ENCODE measurements at regions of chr2 and their contacts with region 1.

Region 1: DNA sequence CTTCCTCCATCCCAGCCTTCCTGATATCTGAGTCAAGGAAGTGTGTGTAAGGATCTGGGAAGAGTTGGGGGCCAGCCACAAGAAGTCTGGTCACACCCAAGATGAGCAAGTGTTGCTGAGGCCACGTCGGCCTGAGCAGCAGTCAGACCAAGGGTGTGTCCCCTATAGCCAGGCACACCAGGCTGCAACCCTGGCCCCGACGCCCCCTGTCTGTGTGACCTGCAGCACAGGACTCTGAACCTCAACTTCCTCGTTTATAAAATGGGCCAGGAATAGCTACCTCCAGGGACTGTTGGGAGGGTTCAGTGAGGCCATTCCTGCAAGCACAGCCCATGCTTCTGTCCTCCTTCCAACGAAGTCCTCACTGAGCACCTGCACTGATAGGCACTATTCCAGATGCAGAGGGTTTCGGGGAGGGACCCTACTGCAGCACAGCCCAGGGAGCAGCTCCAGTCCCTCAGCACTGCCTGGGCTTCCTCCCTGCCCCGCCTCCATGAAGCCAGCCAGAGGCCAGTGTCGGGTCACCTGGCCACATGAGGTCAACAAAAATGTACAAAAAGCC is 13.3 kb downstream of the LIMS2 start:
- DNase-seq: no peak
- ATAC-seq: no peak; the same call in 1 of the 2 replicates
- H3K4me3 ChIP-seq: no peak overlapping the region
- H3K27ac ChIP-seq: no peak overlapping the region
- H3K4me1 ChIP-seq: peaks cover 14% of the 10 kb centered on the region
- H3K27me3 ChIP-seq: no peaks in the 10 kb centered on the region
- CTCF ChIP-seq: no peak
- POLR2A ChIP-seq: no peak
- RAD21 ChIP-seq: no peak

Region 2: GRCh38 chr2:127054996-127055785 is 606.8 kb before region 1 on chr2:
- CTCF ChIA-PET with region 1: no interaction called
- POLR2A ChIA-PET with region 1: interaction called, 11 read pairs
- dilution Hi-C with region 1: no loop called
- in situ Hi-C with region 1: no loop called
- intact Hi-C with region 1: no loop called
- DNase-seq: no peak
- ATAC-seq: no peak
- H3K4me3 ChIP-seq: no peak overlapping the region
- H3K27ac ChIP-seq: no peak overlapping the region
- H3K4me1 ChIP-seq: no peaks in the 10 kb centered on the region
- H3K27me3 ChIP-seq: no peaks in the 10 kb centered on the region
- CTCF ChIP-seq: no peak
- POLR2A ChIP-seq: no peak
- RAD21 ChIP-seq: no peak

Region 3: GRCh38 chr2:127453392-127454171 is 208.4 kb before region 1 on chr2:
- CTCF ChIA-PET with region 1: no interaction called
- POLR2A ChIA-PET with region 1: no interaction called
- dilution Hi-C with region 1: no loop called
- in situ Hi-C with region 1: no loop called
- intact Hi-C with region 1: no loop called
- DNase-seq: no peak
- ATAC-seq: no peak; the same call in 1 of the 2 replicates
- H3K4me3 ChIP-seq: no peak overlapping the region
- H3K27ac ChIP-seq: no peak overlapping the region
- H3K4me1 ChIP-seq: 0 out of 2 replicates have a peak, but pooled peaks cover 4% of the 10 kb centered on the region
- H3K27me3 ChIP-seq: no peaks in the 10 kb centered on the region
- CTCF ChIP-seq: no peak
- POLR2A ChIP-seq: no peak
- RAD21 ChIP-seq: peak; percentile 19; the same call in 1 of the 2 replicates

Measured in IMR-90 (cell line).